ENCODE measurements at regions of chr10 and their contacts with region 1.

Region 1: DNA sequence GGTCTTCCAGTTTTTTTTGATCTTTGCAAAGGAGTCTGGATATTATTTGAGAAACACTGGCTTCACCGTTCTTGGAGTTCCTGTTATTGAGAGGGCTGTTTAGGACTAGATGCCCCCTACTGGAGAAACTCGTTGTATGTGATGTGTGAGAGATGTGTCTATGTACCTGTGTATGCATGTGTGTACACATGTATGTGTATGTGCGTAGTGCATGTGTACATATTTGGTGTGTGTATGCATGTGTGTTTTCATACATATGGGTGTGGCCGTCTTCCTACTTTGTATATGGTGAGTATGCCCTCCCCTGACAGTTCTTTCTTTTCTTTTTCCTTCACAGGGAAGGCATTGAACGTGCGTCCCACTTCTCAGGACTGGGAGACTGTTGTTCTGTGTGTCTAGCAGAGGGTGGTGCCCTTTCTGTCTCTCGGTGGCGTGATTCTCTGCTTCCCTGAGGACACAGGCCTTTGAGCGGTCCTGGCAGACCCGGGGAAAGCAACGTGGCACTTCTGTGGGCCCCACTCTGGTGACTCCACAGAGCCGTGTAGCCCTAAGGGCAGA is 3.0 kb upstream of the CALHM3 start:
- DNase-seq: no peak
- ATAC-seq: peak; percentile 69
- H3K4me3 Mint-ChIP-seq: no peak overlapping the region
- H3K27ac Mint-ChIP-seq: no peak overlapping the region
- H3K4me1 Mint-ChIP-seq: no peaks in the 10 kb centered on the region
- H3K27me3 Mint-ChIP-seq: no peaks in the 10 kb centered on the region

Region 2: DNA sequence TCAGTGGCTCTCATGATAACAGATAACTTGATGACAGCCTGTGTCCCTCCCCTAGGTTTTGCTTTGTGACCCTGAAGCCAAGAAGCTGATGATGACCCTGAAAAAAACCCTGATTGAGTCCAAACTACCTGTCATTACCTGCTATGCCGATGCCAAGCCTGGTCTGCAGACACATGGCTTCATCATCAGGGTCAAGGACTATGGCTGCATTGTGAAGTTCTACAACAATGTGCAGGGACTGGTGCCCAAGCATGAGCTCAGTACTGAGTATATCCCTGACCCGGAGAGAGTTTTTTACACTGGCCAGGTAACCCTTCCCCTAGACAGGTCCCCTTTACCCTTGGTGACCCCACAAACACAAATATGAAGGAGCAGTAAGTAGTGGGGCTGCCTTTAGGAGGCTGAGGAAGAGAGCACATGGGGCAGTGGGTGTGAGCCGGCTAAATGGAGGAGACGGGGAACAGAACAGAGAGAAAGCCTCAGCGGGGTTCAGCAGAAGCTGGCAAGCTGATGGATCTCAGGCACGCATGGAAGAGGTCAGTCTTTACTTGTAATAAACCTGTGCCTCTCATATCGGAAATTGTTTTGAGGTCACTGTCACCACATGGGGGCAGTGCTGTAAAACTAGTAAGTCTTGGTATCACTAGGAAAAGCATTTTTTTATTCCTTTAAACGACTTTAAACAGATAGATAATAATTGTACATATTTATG is 65.5 kb before region 1 on chr10:
- CTCF ChIA-PET with region 1: interaction called, 15 read pairs
- POLR2A ChIA-PET with region 1: no interaction called
- intact Hi-C with region 1: loop called (anchors 1 to 2 kb)
- DNase-seq: peak; percentile 70
- ATAC-seq: peak; percentile 55
- H3K4me3 Mint-ChIP-seq: no peak overlapping the region
- H3K27ac Mint-ChIP-seq: no peak overlapping the region
- H3K4me1 Mint-ChIP-seq: no peaks in the 10 kb centered on the region
- H3K27me3 Mint-ChIP-seq: no peaks in the 10 kb centered on the region

Region 3: GRCh38 chr10:103451831-103452505 is 30.1 kb before region 1 on chr10 and contains the start of gene CALHM2:
- CTCF ChIA-PET with region 1: interaction called, 11 read pairs
- POLR2A ChIA-PET with region 1: no interaction called
- intact Hi-C with region 1: loop called (anchors 1 to 2 kb)
- DNase-seq: peak; percentile 81
- ATAC-seq: peak; percentile 80
- H3K4me3 Mint-ChIP-seq: peak within 1 kb of the TSS; percentile 79
- H3K27ac Mint-ChIP-seq: peak within 1 kb of the TSS; percentile 78
- H3K4me1 Mint-ChIP-seq: peaks cover 40% of the 10 kb centered on the region
- H3K27me3 Mint-ChIP-seq: no peaks in the 10 kb centered on the region
- total RNA-seq, gene CALHM2: 10.1 to 12.0 TPM

Region 4: DNA sequence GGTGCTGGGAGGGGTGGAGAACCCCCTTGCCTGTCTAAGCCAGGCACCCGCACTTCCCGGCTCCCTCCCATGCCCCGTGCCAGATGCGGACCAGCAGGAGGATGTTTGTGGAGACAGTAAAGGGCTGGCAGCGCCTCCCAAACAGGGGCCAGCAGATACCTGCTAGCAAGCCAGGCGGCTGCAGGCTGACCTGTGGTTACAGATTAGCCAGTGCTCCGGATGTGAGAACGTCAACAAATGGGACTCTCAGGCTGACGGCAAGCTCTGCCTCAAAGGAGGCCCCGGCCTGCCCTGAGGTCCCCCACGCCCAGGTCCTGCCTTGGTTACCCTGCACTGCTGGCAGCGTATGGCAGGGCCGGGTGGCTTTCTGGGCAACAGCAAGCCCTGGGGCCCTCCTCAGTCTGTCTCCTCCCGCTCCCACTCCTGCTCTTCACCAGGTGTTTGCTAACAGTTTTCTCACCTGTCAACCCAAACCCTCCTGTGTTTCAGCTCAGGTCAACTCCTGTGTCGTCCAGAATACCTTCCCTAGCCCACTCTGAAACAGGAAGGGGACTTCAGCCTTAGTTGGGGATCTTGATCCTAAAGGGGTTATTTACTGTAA is 96.8 kb after region 1 on chr10:
- CTCF ChIA-PET with region 1: no interaction called
- POLR2A ChIA-PET with region 1: no interaction called
- intact Hi-C with region 1: no loop called
- DNase-seq: no peak
- ATAC-seq: no peak
- H3K4me3 Mint-ChIP-seq: no peak overlapping the region
- H3K27ac Mint-ChIP-seq: no peak overlapping the region
- H3K4me1 Mint-ChIP-seq: peaks cover 3% of the 10 kb centered on the region
- H3K27me3 Mint-ChIP-seq: no peaks in the 10 kb centered on the region

Region 5: GRCh38 chr10:104666106-104666505 is 1184.1 kb after region 1 on chr10:
- CTCF ChIA-PET with region 1: no interaction called
- POLR2A ChIA-PET with region 1: no interaction called
- intact Hi-C with region 1: no loop called
- DNase-seq: no peak
- ATAC-seq: no peak
- H3K4me3 Mint-ChIP-seq: no peak overlapping the region
- H3K27ac Mint-ChIP-seq: no peak overlapping the region
- H3K4me1 Mint-ChIP-seq: no peaks in the 10 kb centered on the region
- H3K27me3 Mint-ChIP-seq: peaks cover 8% of the 10 kb centered on the region

Measured in activated CD4-positive, alpha-beta T cell treated with anti-CD3 and anti-CD28 coated beads for 36 hours (primary cell).